Right lobe of liver (tissue), 6 donors: ENCODE measurements at regions of chr11 and their contacts with region 1.

Region 1: DNA sequence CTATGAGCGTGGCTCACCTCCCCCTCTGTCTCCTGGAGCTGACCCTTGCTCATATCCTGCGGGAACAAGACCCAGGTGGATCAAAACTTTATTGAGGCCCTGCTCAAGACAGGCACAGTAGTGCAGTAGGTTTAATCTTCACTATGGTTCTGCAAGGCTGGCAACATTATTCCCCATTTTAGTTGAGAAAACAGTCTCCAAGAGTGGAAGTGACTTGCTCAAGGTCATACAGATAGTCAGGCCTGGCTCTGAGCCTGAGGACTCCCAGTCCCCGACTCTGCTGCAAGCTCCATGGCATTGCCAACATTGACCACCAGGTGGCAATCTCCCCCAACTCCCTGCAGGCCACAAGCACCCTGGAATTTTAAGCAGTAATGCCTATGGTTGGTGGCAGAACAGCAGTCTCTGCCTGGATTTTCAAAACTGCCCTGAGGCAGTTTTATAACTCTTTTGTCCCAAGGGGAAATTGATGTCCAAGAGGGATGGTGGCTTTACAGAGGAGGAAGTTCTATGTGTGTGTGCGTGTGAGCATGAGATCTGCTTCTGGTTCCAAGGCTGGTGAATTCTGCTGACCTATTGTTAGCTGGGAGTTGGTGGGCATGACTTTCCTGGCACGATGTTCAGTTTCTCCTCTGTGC is 34.1 kb downstream of the NEU3 start:
- DNase-seq: peak; percentile 76 to 81 (median 78)
- ATAC-seq: peak; percentile 97 to 99 (median 98)
- H3K4me3 ChIP-seq: no peak overlapping the region
- H3K27ac ChIP-seq: no peak overlapping the region
- H3K4me1 ChIP-seq: no peaks in the 10 kb centered on the region
- H3K27me3 ChIP-seq: no peaks in the 10 kb centered on the region
- CTCF ChIP-seq: peak; percentile 87 to 98 (median 96)
- POLR2A ChIP-seq: no peak

Region 2: GRCh38 chr11:74929431-74930363 is 93.2 kb before region 1 on chr11:
- intact Hi-C with region 1: loop called in 1 of 2 experiments (anchors 5 kb)
- DNase-seq: peak in 2 of 3 donors; percentile 37 to 70
- ATAC-seq: peak; percentile 86 to 97 (median 92)
- H3K4me3 ChIP-seq: no peak overlapping the region
- H3K27ac ChIP-seq: no peak overlapping the region
- H3K4me1 ChIP-seq: no peaks in the 10 kb centered on the region
- H3K27me3 ChIP-seq: no peaks in the 10 kb centered on the region
- CTCF ChIP-seq: peak; percentile 82 to 92 (median 90)
- POLR2A ChIP-seq: no peak

Region 3: DNA sequence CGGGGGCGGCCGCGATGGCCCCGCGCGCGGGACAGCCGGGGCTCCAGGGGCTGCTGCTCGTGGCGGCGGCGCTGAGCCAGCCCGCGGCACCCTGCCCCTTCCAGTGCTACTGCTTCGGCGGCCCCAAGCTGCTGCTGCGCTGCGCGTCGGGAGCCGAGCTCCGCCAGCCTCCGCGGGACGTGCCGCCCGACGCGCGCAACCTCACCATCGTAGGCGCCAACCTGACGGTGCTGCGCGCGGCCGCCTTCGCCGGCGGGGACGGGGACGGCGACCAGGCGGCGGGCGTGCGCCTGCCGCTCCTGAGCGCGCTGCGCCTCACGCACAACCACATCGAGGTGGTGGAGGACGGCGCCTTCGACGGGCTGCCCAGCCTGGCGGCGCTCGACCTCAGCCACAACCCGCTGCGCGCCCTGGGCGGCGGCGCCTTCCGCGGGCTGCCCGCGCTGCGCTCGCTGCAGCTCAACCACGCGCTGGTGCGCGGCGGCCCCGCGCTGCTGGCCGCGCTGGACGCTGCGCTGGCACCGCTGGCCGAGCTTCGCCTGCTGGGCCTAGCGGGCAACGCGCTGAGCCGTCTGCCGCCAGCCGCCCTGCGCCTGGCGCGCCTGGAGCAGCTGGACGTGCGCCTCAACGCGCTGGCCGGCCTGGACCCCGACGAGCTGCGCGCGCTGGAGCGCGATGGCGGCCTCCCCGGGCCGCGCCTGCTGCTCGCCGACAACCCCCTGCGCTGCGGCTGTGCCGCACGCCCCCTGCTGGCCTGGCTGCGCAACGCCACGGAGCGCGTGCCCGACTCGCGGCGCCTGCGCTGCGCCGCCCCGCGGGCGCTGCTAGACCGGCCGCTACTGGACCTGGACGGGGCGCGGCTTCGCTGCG is 218.4 kb after region 1 on chr11:
- intact Hi-C with region 1: loop called (anchors 10 kb)
- DNase-seq: peak; percentile 87 to 89 (median 88)
- ATAC-seq: peak; percentile 96 to 99 (median 97)
- H3K4me3 ChIP-seq: peak overlapping the region in 2 of 3 donors; percentile 18 to 41
- H3K27ac ChIP-seq: no peak overlapping the region
- H3K4me1 ChIP-seq: peaks cover 0 to 11% (median 0%) of the 10 kb centered on the region in 4 donors
- H3K27me3 ChIP-seq: peaks cover 0 to 12% of the 10 kb centered on the region in 2 donors
- CTCF ChIP-seq: peak; percentile 86 to 100 (median 94)
- POLR2A ChIP-seq: no peak